ENCODE measurements at regions of chr11 and their contacts with region 1.

Region 1: GRCh38 chr11:9250139-9250582 is 15.0 kb downstream of the DENND5A start:
- DNase-seq: peak; percentile 68
- H3K4me3 ChIP-seq: no peak overlapping the region
- H3K27ac ChIP-seq: peak overlapping the region; percentile 1
- H3K4me1 ChIP-seq: peaks cover 35% of the 10 kb centered on the region
- H3K27me3 ChIP-seq: no peaks in the 10 kb centered on the region
- CTCF ChIP-seq: no peak
- POLR2A ChIP-seq: no peak

Region 2: GRCh38 chr11:9203691-9204311 is 46.4 kb before region 1 on chr11:
- CTCF ChIA-PET with region 1: no interaction called
- POLR2A ChIA-PET with region 1: no interaction called
- dilution Hi-C with region 1: no loop called
- intact Hi-C with region 1: loop called (anchors 5 kb)
- DNase-seq: peak; percentile 17
- H3K4me3 ChIP-seq: no peak overlapping the region
- H3K27ac ChIP-seq: no peak overlapping the region
- H3K4me1 ChIP-seq: no peaks in the 10 kb centered on the region
- H3K27me3 ChIP-seq: no peaks in the 10 kb centered on the region
- CTCF ChIP-seq: no peak
- POLR2A ChIP-seq: no peak

Region 3: DNA sequence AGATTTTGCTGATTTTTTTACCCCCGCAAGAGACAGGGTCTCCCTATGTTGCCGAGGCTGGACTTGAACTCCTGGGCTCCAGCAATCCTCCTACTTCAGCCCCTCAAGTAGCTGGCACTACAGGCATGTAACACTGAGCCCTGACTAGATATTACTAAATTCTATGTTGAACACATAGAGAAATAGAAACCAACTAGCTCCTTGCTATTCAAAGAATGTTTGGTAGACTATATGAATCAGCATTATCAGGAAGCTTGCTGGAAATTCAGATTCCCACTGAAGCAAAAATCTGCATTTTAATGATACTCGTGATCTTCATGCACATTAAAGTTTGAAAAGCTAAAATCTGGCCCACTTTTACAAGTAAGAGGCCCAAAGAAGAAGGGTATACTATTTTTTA is 52.3 kb after region 1 on chr11:
- CTCF ChIA-PET with region 1: no interaction called
- POLR2A ChIA-PET with region 1: no interaction called
- dilution Hi-C with region 1: no loop called
- intact Hi-C with region 1: no loop called
- DNase-seq: no peak
- H3K4me3 ChIP-seq: no peak overlapping the region
- H3K27ac ChIP-seq: no peak overlapping the region
- H3K4me1 ChIP-seq: no peaks in the 10 kb centered on the region
- H3K27me3 ChIP-seq: no peaks in the 10 kb centered on the region
- CTCF ChIP-seq: no peak
- POLR2A ChIP-seq: no peak

Measured in endothelial cell of umbilical vein (primary cell).